ENCODE measurements at regions of chr10 and their contacts with region 1.

Region 1: DNA sequence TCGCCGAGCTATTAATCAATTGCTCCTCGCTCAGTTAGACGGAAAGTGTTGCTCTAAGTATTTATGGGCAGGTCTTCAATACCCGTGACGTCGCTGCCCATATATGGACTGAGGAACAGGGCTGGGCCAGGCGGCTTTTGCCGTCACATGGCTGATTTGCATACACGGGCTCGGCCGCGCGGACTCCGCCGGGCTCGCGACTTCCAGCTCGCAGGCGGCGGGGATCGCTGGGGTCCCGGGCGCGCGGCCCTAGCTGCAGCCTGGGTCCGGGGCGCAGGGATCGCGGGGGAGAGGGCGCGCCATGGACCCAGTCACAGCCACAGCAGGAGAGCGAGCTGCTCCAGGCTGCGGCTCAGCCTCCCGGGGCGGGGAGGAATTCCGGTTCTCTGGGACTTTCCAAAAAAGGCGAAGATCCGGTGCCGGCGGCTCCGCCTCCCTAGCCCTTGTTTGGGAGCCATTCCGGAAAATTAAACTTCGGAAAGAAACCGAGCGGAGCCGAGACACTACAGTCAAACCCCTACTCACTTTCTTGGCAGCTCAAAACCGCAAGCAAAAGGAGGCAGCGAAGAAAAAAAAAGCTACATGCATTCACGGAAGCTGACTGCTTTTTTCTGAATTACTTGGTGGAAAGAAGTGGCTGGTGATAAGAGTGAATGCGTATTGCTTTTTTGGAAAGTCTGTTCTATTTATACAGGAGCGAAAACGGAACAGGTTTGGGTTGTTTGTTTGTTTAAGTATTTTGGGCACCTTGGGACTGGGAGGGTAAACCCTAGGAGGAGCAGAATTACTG is at the start of gene EGR2:
- DNase-seq: peak; percentile 80 to 96 (median 94)
- H3K4me3 ChIP-seq: peak within 1 kb of the TSS; percentile 57 to 99 (median 82)
- H3K27ac ChIP-seq: peak within 1 kb of the TSS in 57 of 59 donors; percentile 43 to 91 (median 82)
- H3K27me3 ChIP-seq: peaks cover 0 to 25% (median 12%) of the 10 kb centered on the region in 45 donors
- CTCF ChIP-seq: peak in 16 of 56 donors; percentile 4 to 48 (median 15)
- total RNA-seq, gene EGR2: 0.17 to 25.9 (median 1.5) TPM

Region 2: DNA sequence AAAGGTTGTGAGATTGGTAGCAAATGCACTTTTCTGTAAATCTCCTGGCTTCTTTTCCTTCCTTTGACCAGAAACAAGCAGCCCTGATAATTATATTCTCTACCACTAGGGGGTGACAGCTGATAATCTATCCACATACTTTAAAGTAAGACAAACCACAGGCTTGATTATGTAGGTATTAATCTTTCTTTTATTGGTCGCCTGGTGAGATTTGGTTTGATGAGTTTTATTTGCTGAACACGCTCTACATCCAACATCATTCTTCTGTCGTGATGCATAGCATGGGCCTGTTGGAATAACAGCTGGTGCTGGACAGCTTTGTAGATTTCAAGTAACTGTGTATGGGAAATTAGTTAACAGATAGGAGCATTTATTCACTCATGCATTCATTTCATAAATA is 378.8 kb before region 1 on chr10:
- intact Hi-C with region 1: loop called (anchors 5 kb)
- DNase-seq: no peak
- H3K4me3 ChIP-seq: no peak overlapping the region
- H3K27ac ChIP-seq: peak overlapping the region in 2 of 59 donors; percentile 44 to 51
- H3K27me3 ChIP-seq: no peaks in the 10 kb centered on the region
- CTCF ChIP-seq: peak; percentile 63 to 96 (median 86)

Region 3: GRCh38 chr10:62610649-62611229 is 205.8 kb before region 1 on chr10:
- intact Hi-C with region 1: loop called (anchors 1 to 5 kb)
- DNase-seq: peak in 2 of 10 donors; percentile 33 to 53
- H3K4me3 ChIP-seq: no peak overlapping the region
- H3K27ac ChIP-seq: no peak overlapping the region
- H3K27me3 ChIP-seq: no peaks in the 10 kb centered on the region
- CTCF ChIP-seq: peak; percentile 30 to 86 (median 71)

Region 4: DNA sequence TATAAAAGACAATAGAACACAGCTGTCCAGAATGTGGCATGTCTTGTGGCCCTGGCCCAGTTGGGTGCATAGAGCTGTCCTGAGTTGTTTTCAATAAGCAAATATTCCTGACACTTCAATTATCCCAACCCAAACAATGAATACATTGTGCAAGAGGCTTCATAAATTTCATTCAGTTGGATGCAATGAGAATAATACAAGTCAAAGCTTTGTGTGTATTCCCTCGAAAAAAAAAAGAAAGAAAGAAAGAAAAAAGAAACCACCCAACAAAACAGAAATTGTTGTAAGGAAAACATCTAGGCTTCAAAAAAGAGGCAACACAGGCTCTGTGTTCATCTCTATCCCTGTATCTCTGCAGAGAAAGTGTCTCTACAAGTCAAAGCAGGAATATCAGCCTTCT is 150.8 kb before region 1 on chr10:
- intact Hi-C with region 1: no loop called
- DNase-seq: no peak
- H3K4me3 ChIP-seq: peak overlapping the region in 1 of 59 donors; percentile 2
- H3K27ac ChIP-seq: peak overlapping the region in 8 of 59 donors; percentile 5 to 55 (median 30)
- H3K27me3 ChIP-seq: no peaks in the 10 kb centered on the region
- CTCF ChIP-seq: peak in 2 of 56 donors; percentile 12

Region 5: DNA sequence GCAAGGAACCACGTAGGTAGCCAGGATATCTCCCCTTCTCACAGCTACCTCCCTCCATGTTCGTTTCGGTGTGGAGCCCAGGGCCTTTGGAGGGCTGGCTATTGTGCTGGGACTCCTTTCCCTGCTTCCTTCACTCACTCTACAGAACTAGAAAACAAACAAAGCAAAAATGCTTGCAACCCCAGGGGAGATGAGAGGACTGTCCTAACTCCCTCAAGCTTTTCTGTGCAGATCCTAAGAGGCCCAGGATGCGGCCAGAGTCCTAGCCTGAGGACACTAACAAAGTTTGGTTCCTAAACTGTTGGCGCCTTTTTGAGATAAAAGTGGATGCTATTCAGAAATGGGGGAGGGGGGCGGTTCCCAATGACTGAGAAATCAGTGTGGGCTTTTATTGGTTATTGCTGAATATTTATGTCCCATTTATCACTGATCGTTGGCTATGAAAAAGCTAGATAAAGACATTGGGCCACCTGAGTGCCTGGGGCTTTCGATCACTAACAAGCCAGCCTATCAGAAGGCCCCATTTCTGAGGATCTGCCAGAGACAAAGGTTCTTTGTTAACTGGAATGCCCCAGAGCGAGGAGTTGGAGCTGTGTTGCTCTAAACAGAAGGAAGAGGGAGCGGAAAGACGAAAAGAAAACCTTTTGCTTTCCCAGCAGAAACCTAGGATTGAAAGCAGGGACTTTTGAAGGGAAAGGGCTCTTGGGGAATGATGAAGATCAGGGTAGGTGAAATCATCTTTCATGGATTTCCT is 94.9 kb after region 1 on chr10:
- intact Hi-C with region 1: loop called in 1 of 2 experiments (anchors 5 kb)
- DNase-seq: peak in 3 of 10 donors; percentile 20 to 44 (median 20)
- H3K4me3 ChIP-seq: peak overlapping the region in 47 of 59 donors; percentile 9 to 63 (median 32)
- H3K27ac ChIP-seq: peak overlapping the region in 41 of 59 donors; percentile 6 to 83 (median 60)
- H3K27me3 ChIP-seq: no peaks in the 10 kb centered on the region
- CTCF ChIP-seq: peak in 1 of 56 donors; percentile 9

Region 6: DNA sequence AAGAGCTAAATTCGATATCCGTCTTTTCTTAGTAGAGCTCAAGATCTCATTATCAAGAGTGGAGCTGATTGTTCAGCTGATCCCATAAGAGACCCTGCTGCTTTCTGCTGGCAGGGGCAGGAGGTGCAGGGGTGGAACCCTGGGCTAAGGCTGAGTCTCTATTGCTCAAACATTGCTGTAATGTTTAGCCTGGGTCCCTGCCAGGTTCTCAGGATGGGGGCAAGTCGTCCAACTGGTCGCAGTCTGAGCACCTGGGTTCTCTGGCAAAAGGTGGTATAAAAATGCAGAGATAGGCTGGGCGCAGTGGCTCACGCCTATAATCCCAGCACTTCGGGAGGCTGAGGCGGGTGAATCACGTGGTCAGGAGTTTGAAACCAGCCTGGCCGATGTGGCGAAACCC is 254.6 kb after region 1 on chr10:
- intact Hi-C with region 1: loop called in 1 of 2 experiments (anchors 5 kb)
- DNase-seq: no peak
- H3K4me3 ChIP-seq: no peak overlapping the region
- H3K27ac ChIP-seq: no peak overlapping the region
- H3K27me3 ChIP-seq: peaks cover 0 to 13% (median 0%) of the 10 kb centered on the region in 45 donors
- CTCF ChIP-seq: no peak